ENCODE measurements at regions of chr15 and their contacts with region 1.

Region 1: DNA sequence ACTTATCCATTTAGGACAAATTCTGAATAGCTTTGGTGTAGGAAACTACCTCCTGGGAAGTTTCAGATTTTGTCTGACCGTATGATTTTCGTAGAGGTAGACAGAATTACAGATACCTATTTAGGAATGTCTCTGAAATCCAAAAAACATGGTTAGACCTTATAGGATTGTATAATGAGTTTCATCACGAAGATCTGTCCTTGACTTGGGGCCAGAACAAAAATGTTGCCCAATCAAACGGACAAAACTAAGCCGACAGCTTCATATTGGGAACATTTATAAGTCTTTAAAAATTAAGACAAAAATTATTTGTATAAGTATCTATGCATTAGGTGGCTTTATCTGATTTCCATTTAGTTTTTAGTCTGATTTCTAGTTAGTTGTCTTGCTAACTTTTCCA is 32.6 kb downstream of the MNS1 start:
- DNase-seq: no peak
- CTCF ChIP-seq: no peak

Region 2: DNA sequence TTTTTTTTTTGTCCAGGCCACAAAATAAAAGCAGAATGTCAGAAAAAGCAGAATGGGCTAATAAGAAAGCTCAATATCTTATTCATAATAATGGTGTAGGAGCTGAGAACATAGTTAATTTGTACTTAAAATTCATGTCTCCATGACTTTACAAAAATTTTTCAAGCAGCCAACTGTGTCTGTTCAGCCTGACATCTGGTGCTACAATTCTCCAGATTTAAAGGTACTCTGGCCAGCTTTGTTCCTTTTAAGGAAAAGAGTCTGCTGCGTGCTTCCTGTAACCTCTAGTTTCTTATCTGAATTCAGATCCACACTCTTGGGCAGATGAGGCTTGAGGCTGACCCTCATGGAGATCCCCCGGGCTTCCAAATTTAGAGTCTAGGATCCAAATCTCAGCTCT is 179.9 kb before region 1 on chr15:
- in situ Hi-C with region 1: loop called (anchors 10 kb)
- DNase-seq: no peak
- CTCF ChIP-seq: no peak

Region 3: DNA sequence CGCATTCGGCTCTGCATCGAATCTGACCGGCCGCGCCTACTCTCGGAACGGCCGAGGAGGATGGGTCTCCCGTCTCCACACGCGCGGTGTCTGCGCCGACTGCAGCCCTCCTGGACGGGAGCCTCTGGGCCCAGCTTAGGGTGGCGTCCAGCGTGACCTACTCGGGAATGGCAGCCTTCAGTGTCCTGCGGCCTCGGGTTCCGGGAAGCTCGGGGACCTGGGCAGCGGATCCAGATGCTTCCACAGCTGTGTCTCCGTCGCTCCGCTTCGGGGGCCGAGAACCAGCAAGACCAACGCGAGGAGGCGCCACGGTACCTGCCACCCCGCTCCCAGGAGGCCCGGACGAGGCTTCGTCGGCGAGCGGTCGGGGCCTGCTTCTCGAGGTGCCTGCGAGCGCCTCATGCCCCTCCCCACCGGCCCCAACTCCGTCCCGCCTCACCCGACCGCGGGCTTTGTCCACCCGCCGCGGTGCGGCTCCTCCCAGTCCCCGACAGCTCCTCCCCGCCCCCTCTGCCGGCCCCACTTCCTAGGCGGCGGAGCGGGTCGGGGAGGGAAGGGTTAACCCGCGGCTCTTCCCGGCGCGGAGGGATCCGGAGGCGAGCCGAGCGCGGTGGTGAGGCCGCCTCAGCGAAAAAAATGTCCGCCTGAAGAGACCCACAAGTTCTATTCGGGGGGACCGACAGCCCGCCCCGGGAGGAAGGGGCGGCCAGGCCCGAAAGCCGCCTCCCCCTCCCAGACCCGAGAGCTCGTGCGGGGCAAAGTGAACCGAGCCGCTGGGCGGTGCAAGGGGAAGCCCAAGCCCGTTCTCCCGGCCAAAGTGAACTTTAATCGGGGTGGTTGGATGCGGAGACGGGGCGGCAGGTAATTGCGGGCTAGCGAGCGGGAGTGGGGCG is 486.0 kb after region 1 on chr15 and contains the start of gene TCF12:
- in situ Hi-C with region 1: no loop called
- DNase-seq: peak; percentile 95
- CTCF ChIP-seq: peak; percentile 84

Measured in GM13977 (cell line).